Breast epithelium (tissue), 4 donors: ENCODE measurements at regions of chr9 and their contacts with region 1.

Region 1: GRCh38 chr9:76866689-76867088 is 39.2 kb downstream of the PRUNE2 start:
- DNase-seq: no peak
- H3K4me3 ChIP-seq: no peak overlapping the region
- H3K27ac ChIP-seq: no peak overlapping the region
- H3K4me1 ChIP-seq: no peaks in the 10 kb centered on the region
- H3K27me3 ChIP-seq: no peaks in the 10 kb centered on the region
- CTCF ChIP-seq: no peak
- POLR2A ChIP-seq: no peak

Region 2: DNA sequence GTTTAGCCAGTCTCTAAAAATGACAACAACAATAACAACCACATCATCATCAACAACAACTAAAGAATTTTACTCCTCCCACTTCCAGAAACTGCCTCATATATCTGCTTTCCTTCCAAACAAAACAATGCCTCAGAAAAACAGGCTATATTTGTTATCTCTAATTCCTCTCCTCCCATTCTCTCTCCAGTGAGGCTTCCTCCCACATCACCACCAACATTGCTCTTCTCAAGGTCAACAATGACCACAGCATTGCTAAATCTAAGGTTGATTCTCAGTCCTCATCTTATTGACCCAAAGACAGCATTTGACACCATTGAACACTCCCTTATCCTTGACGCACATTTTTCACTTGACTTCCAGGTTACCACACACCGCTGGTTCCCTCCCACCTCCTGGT is 77.3 kb after region 1 on chr9:
- intact Hi-C with region 1: loop called (anchors 2 kb)
- DNase-seq: no peak
- H3K4me3 ChIP-seq: no peak overlapping the region
- H3K27ac ChIP-seq: no peak overlapping the region
- H3K4me1 ChIP-seq: no peaks in the 10 kb centered on the region
- H3K27me3 ChIP-seq: no peaks in the 10 kb centered on the region
- CTCF ChIP-seq: no peak
- POLR2A ChIP-seq: no peak